Activated T-helper 1 cell treated with anti-CD3 and anti-CD28 coated beads, Interleukin-12 subunit alpha, Interleukin-12 subunit beta, Interleukin-2, Interleukin-4 antibody, amounts not matched to agents 30 ng/mL and 10 ng/mL and 1 ng/mL, durations not matched to agents 14 hours and 24 hours and 36 hours (primary cell): ENCODE measurements at regions of chr7 and their contacts with region 1.

Region 1: GRCh38 chr7:97104719-97105238 is 12.7 kb upstream of the SDHAF3 start:
- DNase-seq: peak; percentile 54
- H3K4me3 Mint-ChIP-seq: no peak overlapping the region
- H3K27ac Mint-ChIP-seq: no peak overlapping the region
- H3K4me1 Mint-ChIP-seq: no peaks in the 10 kb centered on the region
- H3K27me3 Mint-ChIP-seq: peaks cover 6% of the 10 kb centered on the region

Region 2: GRCh38 chr7:97179454-97180104 is 74.8 kb after region 1 on chr7:
- intact Hi-C with region 1: loop called (anchors 1 kb)
- DNase-seq: peak; percentile 5
- H3K4me3 Mint-ChIP-seq: no peak overlapping the region
- H3K27ac Mint-ChIP-seq: no peak overlapping the region
- H3K4me1 Mint-ChIP-seq: no peaks in the 10 kb centered on the region
- H3K27me3 Mint-ChIP-seq: no peaks in the 10 kb centered on the region

Region 3: DNA sequence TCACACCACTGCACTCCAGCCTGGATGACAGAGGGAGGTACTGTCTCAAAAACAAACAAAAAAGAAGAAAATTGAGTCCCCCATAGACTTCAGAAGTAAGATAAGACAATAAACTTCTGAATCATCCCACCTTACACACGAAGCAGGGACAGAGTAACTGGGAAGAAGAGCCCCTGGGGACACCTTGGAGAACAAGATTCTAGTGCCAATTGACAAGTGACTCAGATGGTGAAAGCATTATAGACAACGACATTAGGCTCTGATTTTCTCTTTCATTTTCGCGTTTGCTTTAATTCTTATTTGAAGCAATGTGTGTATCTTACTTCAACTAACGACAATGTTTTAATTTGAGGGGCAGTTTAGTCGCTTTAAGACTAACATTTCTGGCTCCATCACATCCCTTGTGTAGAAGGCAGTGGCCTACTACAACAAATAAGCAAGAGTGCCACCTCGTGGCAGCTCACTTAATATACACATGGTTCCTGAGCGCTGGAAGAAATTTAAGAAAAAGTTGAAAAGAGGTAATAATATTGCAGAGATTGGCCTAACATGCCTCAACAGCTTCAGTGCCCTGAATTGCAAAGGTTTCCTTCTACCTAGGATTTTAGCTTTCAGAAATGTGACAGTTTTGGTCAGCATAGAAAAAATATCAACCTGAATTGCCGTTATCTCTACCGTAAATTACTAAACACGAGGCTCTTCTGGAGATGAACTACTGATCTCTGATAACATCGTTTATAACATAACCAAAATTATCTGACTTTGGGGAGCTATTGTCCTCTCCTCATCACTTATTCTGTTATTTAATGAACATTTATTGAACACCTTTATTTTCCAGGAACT is 730.7 kb after region 1 on chr7:
- intact Hi-C with region 1: loop called (anchors 1 kb)
- DNase-seq: peak; percentile 31
- H3K4me3 Mint-ChIP-seq: no peak overlapping the region
- H3K27ac Mint-ChIP-seq: no peak overlapping the region
- H3K4me1 Mint-ChIP-seq: no peaks in the 10 kb centered on the region
- H3K27me3 Mint-ChIP-seq: peaks cover 27% of the 10 kb centered on the region

Region 4: DNA sequence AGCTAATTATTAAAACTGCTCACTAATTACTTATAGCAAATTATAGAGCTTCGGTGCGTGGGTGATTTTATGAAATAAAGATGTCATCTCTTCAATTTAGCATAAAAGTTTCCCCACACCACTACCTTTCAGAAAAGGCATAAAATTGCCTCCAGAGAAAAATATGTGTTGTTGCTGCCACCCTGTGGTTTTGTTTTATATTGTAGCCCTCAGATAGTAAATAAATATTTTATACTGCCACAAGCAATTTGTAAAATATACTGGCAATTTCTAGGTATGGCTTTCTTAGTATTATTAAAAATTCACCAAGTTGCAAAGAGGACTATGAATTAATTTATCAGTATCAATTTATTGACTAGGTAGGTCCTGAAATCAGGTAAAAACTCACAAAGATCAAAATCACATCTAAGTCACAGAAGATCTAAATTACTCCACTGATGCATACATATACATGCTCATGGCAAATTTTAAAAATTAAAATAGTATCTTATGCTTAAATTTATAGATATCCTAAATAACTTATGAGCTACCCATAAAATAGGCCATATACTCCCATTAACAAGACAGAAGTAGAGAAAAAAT is 740.9 kb after region 1 on chr7:
- intact Hi-C with region 1: loop called (anchors 2 kb)
- DNase-seq: no peak
- H3K4me3 Mint-ChIP-seq: no peak overlapping the region
- H3K27ac Mint-ChIP-seq: no peak overlapping the region
- H3K4me1 Mint-ChIP-seq: no peaks in the 10 kb centered on the region
- H3K27me3 Mint-ChIP-seq: no peaks in the 10 kb centered on the region